PC-3 (cell line): ENCODE measurements at regions of chr1 and their contacts with region 1.

Region 1: GRCh38 chr1:63487336-63488065 is 35.5 kb downstream of the ITGB3BP start:
- DNase-seq: peak; percentile 87
- ATAC-seq: peak; percentile 94
- H3K4me3 ChIP-seq: peak overlapping the region; percentile 5; the same call in 1 of the 2 replicates
- H3K27ac ChIP-seq: peak overlapping the region; percentile 88
- H3K4me1 ChIP-seq: peaks cover 19% of the 10 kb centered on the region
- H3K27me3 ChIP-seq: no peaks in the 10 kb centered on the region
- CTCF ChIP-seq: no peak

Region 2: DNA sequence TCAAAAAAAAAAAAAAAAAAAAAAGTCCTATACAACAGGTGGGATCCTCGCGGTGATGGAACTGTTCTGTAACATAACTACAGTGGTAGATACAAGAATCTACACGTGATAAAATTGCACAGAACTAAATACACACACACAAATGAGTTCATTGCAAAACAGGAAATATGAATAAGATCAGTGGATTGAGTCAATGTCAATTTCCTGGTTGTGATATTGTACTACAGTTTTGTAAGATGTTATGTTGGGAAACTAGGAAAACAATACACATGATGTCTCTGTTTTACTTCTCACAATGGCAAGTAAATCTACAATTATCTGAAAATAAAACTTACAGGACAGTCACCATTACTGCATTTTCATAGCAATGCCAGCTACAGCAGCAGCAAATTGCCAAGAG is 24.3 kb before region 1 on chr1:
- CTCF ChIA-PET with region 1: no interaction called
- POLR2A ChIA-PET with region 1: no interaction called
- intact Hi-C with region 1: loop called (anchors 1 kb)
- DNase-seq: peak; percentile 45
- ATAC-seq: peak; percentile 59
- H3K4me3 ChIP-seq: no peak overlapping the region
- H3K27ac ChIP-seq: peak overlapping the region; percentile 22
- H3K4me1 ChIP-seq: peaks cover 6% of the 10 kb centered on the region; the same call in 1 of the 2 replicates
- H3K27me3 ChIP-seq: no peaks in the 10 kb centered on the region
- CTCF ChIP-seq: no peak

Region 3: DNA sequence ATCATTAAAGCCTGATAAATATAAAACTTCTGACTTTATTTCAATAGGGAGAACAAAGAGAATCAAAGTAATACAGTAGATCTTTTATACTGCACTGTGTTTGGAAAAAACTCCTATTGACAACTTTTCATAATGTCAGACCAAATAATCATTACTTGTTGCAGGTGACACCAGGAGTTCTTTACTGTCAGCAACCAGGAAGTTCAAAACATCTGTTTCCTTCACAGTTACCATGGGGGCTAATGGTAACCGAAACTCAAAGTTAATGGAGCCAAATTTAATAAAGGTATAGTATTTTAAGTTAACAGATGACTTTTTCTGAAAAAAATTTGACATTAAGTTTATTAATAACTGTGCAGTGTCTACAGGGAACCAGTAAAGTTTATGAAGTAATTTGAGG is 46.4 kb after region 1 on chr1:
- CTCF ChIA-PET with region 1: no interaction called
- POLR2A ChIA-PET with region 1: no interaction called
- intact Hi-C with region 1: no loop called
- DNase-seq: no peak
- ATAC-seq: no peak
- H3K4me3 ChIP-seq: no peak overlapping the region
- H3K27ac ChIP-seq: no peak overlapping the region
- H3K4me1 ChIP-seq: no peaks in the 10 kb centered on the region
- H3K27me3 ChIP-seq: no peaks in the 10 kb centered on the region
- CTCF ChIP-seq: no peak